PC-3 (cell line): ENCODE measurements at regions of chr17 and their contacts with region 1.

Region 1: GRCh38 chr17:19766422-19767270 is 18.5 kb upstream of the ALDH3A1 start:
- DNase-seq: peak; percentile 86
- ATAC-seq: peak; percentile 95
- H3K4me3 ChIP-seq: no peak overlapping the region
- H3K27ac ChIP-seq: no peak overlapping the region
- H3K4me1 ChIP-seq: peaks cover 12% of the 10 kb centered on the region
- H3K27me3 ChIP-seq: no peaks in the 10 kb centered on the region
- CTCF ChIP-seq: peak; percentile 99

Region 2: DNA sequence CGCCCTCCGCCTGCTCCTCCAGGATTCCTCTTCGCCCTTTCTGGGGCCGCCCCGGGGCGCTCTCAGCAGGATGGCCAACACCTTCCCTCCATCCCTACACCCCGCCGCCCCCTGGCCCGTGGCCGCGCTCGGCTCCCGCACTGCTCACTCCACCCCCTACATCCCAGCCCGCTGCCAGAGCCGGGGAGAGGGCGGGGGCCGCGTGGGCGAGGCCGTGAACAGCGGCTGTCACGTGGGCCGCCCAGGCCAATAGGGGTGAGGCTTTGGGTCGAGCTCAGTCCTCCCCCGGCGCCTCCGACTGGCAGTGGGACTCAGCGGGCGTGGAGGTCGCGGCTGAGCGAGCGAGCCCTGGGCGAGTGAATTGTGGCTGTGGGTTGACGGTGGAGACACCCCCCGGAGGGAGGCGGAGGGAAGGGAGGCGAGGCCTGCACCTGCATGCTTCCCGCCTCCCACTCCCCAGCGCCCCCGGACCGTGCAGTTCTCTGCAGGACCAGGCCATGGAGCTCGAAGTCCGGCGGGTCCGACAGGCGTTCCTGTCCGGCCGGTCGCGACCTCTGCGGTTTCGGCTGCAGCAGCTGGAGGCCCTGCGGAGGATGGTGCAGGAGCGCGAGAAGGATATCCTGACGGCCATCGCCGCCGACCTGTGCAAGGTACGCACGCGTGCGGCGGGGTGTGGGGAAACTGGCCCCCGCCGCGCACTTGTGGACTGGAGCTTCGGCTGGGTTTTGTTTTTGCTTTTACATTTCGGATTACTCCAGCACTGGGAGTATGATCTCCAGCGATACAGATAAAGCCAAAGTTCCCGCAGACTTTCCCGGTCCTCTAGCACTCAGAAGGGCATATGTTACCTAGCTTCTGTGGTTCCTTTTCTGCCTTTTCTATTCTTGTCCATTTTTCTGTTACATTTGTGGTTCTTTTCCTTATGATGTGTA is 117.9 kb before region 1 on chr17 and contains the start of gene ALDH3A2:
- CTCF ChIA-PET with region 1: interaction called, 4 read pairs
- POLR2A ChIA-PET with region 1: no interaction called
- intact Hi-C with region 1: loop called (anchors 5 kb)
- DNase-seq: peak; percentile 97
- ATAC-seq: peak; percentile 85
- H3K4me3 ChIP-seq: peak within 1 kb of the TSS; percentile 90
- H3K27ac ChIP-seq: peak within 1 kb of the TSS; percentile 76
- H3K4me1 ChIP-seq: peaks cover 64% of the 10 kb centered on the region
- H3K27me3 ChIP-seq: no peaks in the 10 kb centered on the region
- CTCF ChIP-seq: 0 out of 2 replicates have a peak, but pooled peaks have one; percentile 29
- total RNA-seq, gene ALDH3A2: 125 and 143 TPM in 2 replicates

Region 3: GRCh38 chr17:19781488-19782458 is 15.1 kb after region 1 on chr17:
- CTCF ChIA-PET with region 1: no interaction called
- POLR2A ChIA-PET with region 1: interaction called, 16 read pairs
- intact Hi-C with region 1: no loop called
- DNase-seq: peak; percentile 25
- ATAC-seq: peak; percentile 87
- H3K4me3 ChIP-seq: no peak overlapping the region
- H3K27ac ChIP-seq: no peak overlapping the region
- H3K4me1 ChIP-seq: no peaks in the 10 kb centered on the region
- H3K27me3 ChIP-seq: no peaks in the 10 kb centered on the region
- CTCF ChIP-seq: no peak

Region 4: DNA sequence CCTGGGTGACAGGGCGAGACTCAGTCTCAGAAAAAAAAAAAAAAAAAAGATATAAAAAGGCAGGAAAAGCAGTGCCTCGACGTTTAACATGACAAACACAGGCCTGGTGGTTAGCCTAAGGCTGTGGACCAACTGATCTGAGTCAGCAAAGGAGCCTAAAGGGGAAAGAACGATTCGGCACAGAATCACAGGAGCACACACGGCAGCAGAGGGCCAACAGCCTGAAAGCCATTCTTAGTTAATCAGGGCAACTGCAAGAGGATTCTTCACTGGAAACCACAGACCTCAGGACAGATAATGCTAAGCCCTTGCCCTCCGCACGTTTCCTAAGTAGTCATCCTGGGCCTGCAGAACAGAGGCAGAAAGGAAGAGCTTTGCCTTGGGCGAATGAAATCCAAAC is 1432.7 kb after region 1 on chr17:
- CTCF ChIA-PET with region 1: no interaction called
- POLR2A ChIA-PET with region 1: interaction called, 14 read pairs
- intact Hi-C with region 1: no loop called
- DNase-seq: peak; percentile 60
- ATAC-seq: no peak
- H3K4me3 ChIP-seq: no peak overlapping the region
- H3K27ac ChIP-seq: no peak overlapping the region
- H3K4me1 ChIP-seq: peaks cover 6% of the 10 kb centered on the region; the same call in 1 of the 2 replicates
- H3K27me3 ChIP-seq: no peaks in the 10 kb centered on the region
- CTCF ChIP-seq: no peak